ENCODE measurements at regions of chr4 and their contacts with region 1.

Region 1: GRCh38 chr4:42627885-42628646 is 28.8 kb downstream of the ATP8A1 start:
- DNase-seq: peak; percentile 76
- H3K4me3 Mint-ChIP-seq: peak overlapping the region; percentile 47
- H3K27ac Mint-ChIP-seq: peak overlapping the region; percentile 88
- H3K4me1 Mint-ChIP-seq: peaks cover 57% of the 10 kb centered on the region
- H3K27me3 Mint-ChIP-seq: no peaks in the 10 kb centered on the region

Region 2: DNA sequence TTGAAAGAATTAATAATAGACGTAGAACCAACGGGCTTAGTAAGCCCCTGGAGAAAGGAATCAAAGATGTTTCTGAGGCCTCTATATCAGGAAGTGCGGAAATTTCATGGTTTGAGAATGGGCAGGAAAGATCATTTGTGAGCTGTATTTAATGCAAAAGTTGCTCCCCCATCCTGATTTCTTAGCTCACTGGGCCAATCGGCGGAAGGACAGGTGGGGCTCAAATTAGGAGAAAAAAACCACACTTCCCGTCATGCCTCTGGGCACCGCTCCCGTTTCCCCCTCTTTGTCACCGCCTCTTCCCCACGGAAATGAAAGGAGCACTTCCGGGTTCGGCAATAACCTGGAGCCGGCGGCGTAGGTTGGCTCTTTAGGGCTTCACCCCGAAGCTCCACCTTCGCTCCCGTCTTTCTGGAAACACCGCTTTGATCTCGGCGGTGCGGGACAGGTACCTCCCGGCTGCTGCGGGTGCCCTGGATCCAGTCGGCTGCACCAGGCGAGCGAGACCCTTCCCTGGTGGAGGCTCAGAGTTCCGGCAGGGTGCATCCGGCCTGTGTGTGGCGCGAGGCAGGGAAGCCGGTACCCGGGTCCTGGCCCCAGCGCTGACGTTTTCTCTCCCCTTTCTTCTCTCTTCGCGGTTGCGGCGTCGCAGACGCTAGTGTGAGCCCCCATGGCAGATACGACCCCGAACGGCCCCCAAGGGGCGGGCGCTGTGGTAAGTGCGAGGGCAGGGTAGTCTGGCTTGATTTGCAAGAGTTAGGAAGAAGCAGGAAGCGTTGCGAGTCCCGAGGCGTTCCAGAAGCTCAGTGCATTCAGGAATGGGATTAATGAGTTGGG is 693.0 kb before region 1 on chr4 and contains the start of gene TMEM33:
- CTCF ChIA-PET with region 1: no interaction called
- intact Hi-C with region 1: loop called (anchors 1 kb)
- DNase-seq: peak; percentile 87
- H3K4me3 Mint-ChIP-seq: peak within 1 kb of the TSS; percentile 97
- H3K27ac Mint-ChIP-seq: peak within 1 kb of the TSS; percentile 88
- H3K4me1 Mint-ChIP-seq: peaks cover 38% of the 10 kb centered on the region
- H3K27me3 Mint-ChIP-seq: no peaks in the 10 kb centered on the region
- total RNA-seq, gene TMEM33: 33.9 to 34.6 TPM

Region 3: DNA sequence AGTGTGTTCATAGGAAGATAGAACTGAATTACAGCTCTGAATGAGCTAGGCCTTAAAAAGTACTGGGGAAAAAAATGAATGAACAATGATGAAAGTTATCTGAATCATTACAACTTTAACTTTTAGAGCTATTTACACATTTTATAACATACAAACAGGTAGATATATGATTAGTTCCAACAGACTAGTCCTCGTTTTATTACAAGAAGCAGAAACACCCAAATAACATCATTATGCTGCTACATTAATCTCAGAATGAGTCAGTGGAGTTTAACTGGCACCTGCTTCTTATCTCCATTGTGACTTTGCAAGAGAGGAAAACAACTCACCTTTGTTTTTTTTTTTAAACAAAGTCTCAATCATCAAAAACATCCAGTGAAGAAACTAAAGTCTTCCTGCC is 13.6 kb after region 1 on chr4:
- CTCF ChIA-PET with region 1: interaction called, 4 read pairs
- intact Hi-C with region 1: loop called (anchors 1 kb)
- DNase-seq: no peak
- H3K4me3 Mint-ChIP-seq: peak overlapping the region; percentile 28
- H3K27ac Mint-ChIP-seq: peak overlapping the region; percentile 78
- H3K4me1 Mint-ChIP-seq: peaks cover 91% of the 10 kb centered on the region
- H3K27me3 Mint-ChIP-seq: no peaks in the 10 kb centered on the region

Region 4: DNA sequence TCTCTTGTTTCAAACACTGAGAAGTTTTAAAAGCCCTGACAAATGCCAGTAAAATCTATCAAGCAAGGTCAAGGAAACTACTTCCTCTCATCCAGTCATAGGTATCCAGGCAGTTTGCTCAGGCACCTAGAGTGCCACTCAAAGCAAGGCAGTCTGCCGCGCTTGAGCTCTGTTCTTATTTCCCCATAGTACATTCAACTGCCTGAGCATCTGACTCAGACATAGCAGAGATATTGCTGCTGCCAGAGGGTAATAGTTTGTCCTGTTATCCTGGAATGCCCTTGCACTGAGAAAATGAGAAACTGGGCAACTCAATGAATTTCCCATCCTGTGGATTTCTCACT is 45.0 kb after region 1 on chr4:
- CTCF ChIA-PET with region 1: interaction called, 4 read pairs
- intact Hi-C with region 1: loop called (anchors 1 kb)
- DNase-seq: peak; percentile 68
- H3K4me3 Mint-ChIP-seq: peak overlapping the region; percentile 49
- H3K27ac Mint-ChIP-seq: peak overlapping the region; percentile 94
- H3K4me1 Mint-ChIP-seq: peaks cover 70% of the 10 kb centered on the region
- H3K27me3 Mint-ChIP-seq: no peaks in the 10 kb centered on the region

Measured in activated naive CD4-positive, alpha-beta T cell treated with anti-CD3 and anti-CD28 coated beads for 36 hours (primary cell).